ENCODE measurements at regions of chr7 and their contacts with region 1.

Region 1: GRCh38 chr7:135211179-135211945 is at the start of gene WDR91:
- DNase-seq: peak; percentile 86
- H3K4me3 Mint-ChIP-seq: peak within 1 kb of the TSS; percentile 95
- H3K27ac Mint-ChIP-seq: peak within 1 kb of the TSS; percentile 96
- H3K4me1 Mint-ChIP-seq: peaks cover 32% of the 10 kb centered on the region
- H3K27me3 Mint-ChIP-seq: no peaks in the 10 kb centered on the region
- total RNA-seq, gene WDR91: 19.2 and 22.6 TPM in 2 replicates

Region 2: DNA sequence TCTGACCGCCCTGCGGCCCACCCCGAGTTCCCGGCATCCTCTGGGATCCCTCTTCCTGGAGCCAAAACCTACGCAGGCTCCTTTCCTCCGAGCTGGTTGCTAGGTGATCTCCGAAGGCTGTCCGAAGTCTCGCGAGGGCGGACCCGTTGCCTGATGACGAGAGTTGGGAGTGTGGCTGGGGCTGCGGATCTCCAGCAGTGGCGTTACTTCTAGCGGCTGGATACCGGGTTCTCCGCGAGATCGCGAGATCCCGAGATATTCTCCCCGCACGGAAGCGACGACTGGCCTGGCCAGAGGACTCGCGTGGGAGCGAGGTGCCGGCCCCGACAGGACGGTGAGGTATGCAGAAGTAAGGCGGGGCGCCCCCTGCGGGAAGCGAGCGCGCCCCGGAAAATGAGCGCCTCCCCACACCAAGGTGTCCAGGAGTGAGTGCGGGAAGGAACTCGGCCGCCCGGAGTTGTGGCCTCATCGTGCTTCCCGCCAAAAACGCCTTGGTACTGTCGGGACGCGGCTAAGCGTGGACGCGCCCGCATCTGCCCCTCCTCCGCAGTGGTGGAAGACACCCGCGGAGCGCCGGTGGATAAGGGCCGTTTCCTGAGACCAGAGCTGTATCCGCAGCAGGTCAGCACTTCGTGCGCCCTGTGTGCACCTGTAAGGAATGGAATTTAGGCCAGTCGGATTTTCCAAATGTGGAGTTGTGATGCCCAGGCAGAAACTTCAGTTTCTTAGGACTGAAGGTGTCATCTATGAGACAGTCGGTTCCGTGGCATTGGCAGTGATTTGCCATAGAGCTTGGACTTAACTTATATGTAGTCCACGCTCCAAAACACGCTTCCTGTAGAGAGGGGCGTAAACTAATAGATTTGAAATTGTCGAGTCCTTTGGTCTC is 224.8 kb before region 1 on chr7 and contains the start of gene AGBL3:
- intact Hi-C with region 1: loop called (anchors 5 kb)
- DNase-seq: peak; percentile 85
- H3K4me3 Mint-ChIP-seq: peak within 1 kb of the TSS; percentile 95
- H3K27ac Mint-ChIP-seq: peak within 1 kb of the TSS; percentile 94
- H3K4me1 Mint-ChIP-seq: peaks cover 33% of the 10 kb centered on the region
- H3K27me3 Mint-ChIP-seq: no peaks in the 10 kb centered on the region
- total RNA-seq, gene AGBL3: 1.6 and 3.9 TPM in 2 replicates

Measured in activated T-helper 2 cell treated with anti-CD3 and anti-CD28 coated beads, Interferon-gamma antibody, Interleukin-2, Interleukin-4, amounts not matched to agents 10 μg/mL and 5 μg/mL and 100 μg/mL, durations not matched to agents 14 hours and 24 hours and 36 hours (primary cell).